Activated B cell treated with CpG ODN at 0.5 μM for 24 hours (primary cell): ENCODE measurements at regions of chr20 and their contacts with region 1.

Region 1: DNA sequence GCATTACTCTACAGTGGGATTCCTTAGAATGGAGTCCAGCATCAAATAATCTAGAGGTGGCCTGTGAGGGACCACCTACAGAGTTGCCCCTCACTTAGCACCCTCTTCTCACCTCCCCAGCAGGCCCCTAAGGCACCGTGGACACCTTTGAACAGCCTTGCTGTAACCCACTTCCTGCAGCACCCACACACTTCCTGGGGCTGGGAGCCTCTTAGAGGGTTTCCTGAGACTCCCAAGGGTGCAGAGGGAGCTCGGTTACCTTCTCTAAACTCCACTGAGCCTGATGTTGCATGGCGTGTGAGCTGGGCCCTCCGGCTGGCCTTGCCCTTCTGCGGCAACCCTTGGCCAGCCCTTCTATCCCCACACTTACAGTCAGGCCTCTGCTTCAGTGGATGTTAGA is 7.3 kb upstream of the SIRPG start:
- DNase-seq: no peak
- ATAC-seq: peak; percentile 60
- H3K4me3 Mint-ChIP-seq: no peak overlapping the region
- H3K27ac Mint-ChIP-seq: no peak overlapping the region
- H3K4me1 Mint-ChIP-seq: peaks cover 36% of the 10 kb centered on the region
- H3K27me3 Mint-ChIP-seq: no peaks in the 10 kb centered on the region
- CTCF ChIP-seq: no peak

Region 2: GRCh38 chr20:1619861-1620444 is 45.0 kb before region 1 on chr20 and contains the start of gene SIRPB1:
- CTCF ChIA-PET with region 1: no interaction called
- POLR2A ChIA-PET with region 1: no interaction called
- intact Hi-C with region 1: loop called (anchors 5 kb)
- DNase-seq: no peak
- ATAC-seq: peak; percentile 25
- H3K4me3 Mint-ChIP-seq: peak within 1 kb of the TSS; percentile 46
- H3K27ac Mint-ChIP-seq: peak within 1 kb of the TSS; percentile 64
- H3K4me1 Mint-ChIP-seq: peaks cover 70% of the 10 kb centered on the region
- H3K27me3 Mint-ChIP-seq: no peaks in the 10 kb centered on the region
- CTCF ChIP-seq: no peak
- total RNA-seq, gene SIRPB1: 1.1 and 1.4 TPM in 2 replicates

Region 3: GRCh38 chr20:1741309-1742048 is 76.6 kb after region 1 on chr20:
- CTCF ChIA-PET with region 1: no interaction called
- POLR2A ChIA-PET with region 1: no interaction called
- intact Hi-C with region 1: no loop called
- DNase-seq: no peak
- ATAC-seq: peak; percentile 42
- H3K4me3 Mint-ChIP-seq: no peak overlapping the region
- H3K27ac Mint-ChIP-seq: peak overlapping the region; percentile 24
- H3K4me1 Mint-ChIP-seq: peaks cover 6% of the 10 kb centered on the region
- H3K27me3 Mint-ChIP-seq: peaks cover 7% of the 10 kb centered on the region
- CTCF ChIP-seq: no peak